ENCODE measurements at regions of chr17 and their contacts with region 1.

Region 1: GRCh38 chr17:62179534-62180151 is 114.6 kb upstream of the MED13 start:
- DNase-seq: peak; percentile 93
- H3K4me3 Mint-ChIP-seq: no peak overlapping the region
- H3K27ac Mint-ChIP-seq: no peak overlapping the region
- H3K4me1 Mint-ChIP-seq: peaks cover 6% of the 10 kb centered on the region
- H3K27me3 Mint-ChIP-seq: no peaks in the 10 kb centered on the region
- CTCF ChIP-seq: peak; percentile 45

Region 2: DNA sequence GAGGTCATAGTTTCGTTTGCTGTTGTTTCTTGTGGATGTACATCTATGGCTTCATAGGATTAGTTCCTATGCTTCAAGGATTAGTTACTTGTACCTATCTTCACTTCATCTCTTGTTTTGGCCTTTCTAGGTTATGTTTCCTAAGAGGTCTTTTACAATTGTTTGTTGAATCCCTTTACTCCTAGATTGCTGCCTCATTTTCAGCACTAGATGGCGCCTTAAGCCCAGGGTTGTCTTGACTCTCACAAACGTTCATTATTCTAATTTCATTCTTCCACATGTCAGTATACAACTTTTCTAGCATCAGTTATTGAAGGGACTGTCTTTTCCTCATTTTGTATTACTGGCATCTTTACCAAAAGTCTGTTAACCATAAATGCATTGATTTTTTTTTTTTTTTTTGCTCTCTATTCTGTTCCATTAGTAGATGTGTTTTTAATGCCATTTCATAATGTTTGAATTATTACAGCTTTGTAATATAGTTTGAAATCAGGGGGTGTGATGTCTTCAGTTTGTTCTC is 543.7 kb before region 1 on chr17:
- CTCF ChIA-PET with region 1: no interaction called
- POLR2A ChIA-PET with region 1: no interaction called
- intact Hi-C with region 1: loop called (anchors 1 kb)
- DNase-seq: peak; percentile 75
- H3K4me3 Mint-ChIP-seq: no peak overlapping the region
- H3K27ac Mint-ChIP-seq: no peak overlapping the region
- H3K4me1 Mint-ChIP-seq: no peaks in the 10 kb centered on the region
- H3K27me3 Mint-ChIP-seq: no peaks in the 10 kb centered on the region
- CTCF ChIP-seq: peak; percentile 80

Region 3: GRCh38 chr17:61862975-61863800 is 316.5 kb before region 1 on chr17 and contains the start of gene BRIP1:
- CTCF ChIA-PET with region 1: no interaction called
- POLR2A ChIA-PET with region 1: no interaction called
- intact Hi-C with region 1: loop called (anchors 2 kb)
- DNase-seq: peak; percentile 97
- H3K4me3 Mint-ChIP-seq: peak within 1 kb of the TSS; percentile 90
- H3K27ac Mint-ChIP-seq: peak within 1 kb of the TSS; percentile 94
- H3K4me1 Mint-ChIP-seq: peaks cover 27% of the 10 kb centered on the region
- H3K27me3 Mint-ChIP-seq: no peaks in the 10 kb centered on the region
- CTCF ChIP-seq: no peak
- total RNA-seq, gene BRIP1: 3.4 and 4.7 TPM in 2 replicates

Region 4: GRCh38 chr17:61946359-61946758 is 233.3 kb before region 1 on chr17:
- CTCF ChIA-PET with region 1: no interaction called
- POLR2A ChIA-PET with region 1: no interaction called
- intact Hi-C with region 1: loop called (anchors 10 kb)
- DNase-seq: no peak
- H3K4me3 Mint-ChIP-seq: no peak overlapping the region
- H3K27ac Mint-ChIP-seq: peak overlapping the region; percentile 46
- H3K4me1 Mint-ChIP-seq: no peaks in the 10 kb centered on the region
- H3K27me3 Mint-ChIP-seq: no peaks in the 10 kb centered on the region
- CTCF ChIP-seq: no peak

Region 5: GRCh38 chr17:62065598-62066468 is 113.8 kb before region 1 on chr17:
- CTCF ChIA-PET with region 1: interaction called, 3 read pairs
- POLR2A ChIA-PET with region 1: interaction called, 7 read pairs
- intact Hi-C with region 1: loop called (anchors 5 kb)
- DNase-seq: peak; percentile 98
- H3K4me3 Mint-ChIP-seq: peak overlapping the region; percentile 90
- H3K27ac Mint-ChIP-seq: peak overlapping the region; percentile 95
- H3K4me1 Mint-ChIP-seq: peaks cover 24% of the 10 kb centered on the region
- H3K27me3 Mint-ChIP-seq: no peaks in the 10 kb centered on the region
- CTCF ChIP-seq: peak; percentile 77